ENCODE measurements at regions of chr2 and their contacts with region 1.

Region 1: GRCh38 chr2:148020111-148021058 is at the start of gene ORC4:
- DNase-seq: peak; percentile 99
- ATAC-seq: peak; percentile 89
- H3K4me3 Mint-ChIP-seq: peak within 1 kb of the TSS; percentile 95
- H3K27ac Mint-ChIP-seq: peak within 1 kb of the TSS; percentile 98
- H3K4me1 Mint-ChIP-seq: peaks cover 44% of the 10 kb centered on the region
- H3K27me3 Mint-ChIP-seq: no peaks in the 10 kb centered on the region
- total RNA-seq, gene ORC4: 41.2 to 41.8 TPM

Region 2: GRCh38 chr2:147623328-147623727 is 397.1 kb before region 1 on chr2:
- CTCF ChIA-PET with region 1: no interaction called
- POLR2A ChIA-PET with region 1: no interaction called
- intact Hi-C with region 1: loop called in 1 of 2 experiments (anchors 10 kb)
- DNase-seq: peak; percentile 23
- ATAC-seq: peak; percentile 99
- H3K4me3 Mint-ChIP-seq: peak overlapping the region; percentile 41
- H3K27ac Mint-ChIP-seq: peak overlapping the region; percentile 81
- H3K4me1 Mint-ChIP-seq: peaks cover 34% of the 10 kb centered on the region
- H3K27me3 Mint-ChIP-seq: no peaks in the 10 kb centered on the region

Region 3: GRCh38 chr2:147843864-147844696 is 176.3 kb before region 1 on chr2:
- CTCF ChIA-PET with region 1: no interaction called
- POLR2A ChIA-PET with region 1: interaction called, 7 read pairs
- intact Hi-C with region 1: loop called (anchors 1 to 5 kb)
- DNase-seq: peak; percentile 93
- ATAC-seq: peak; percentile 82
- H3K4me3 Mint-ChIP-seq: peak overlapping the region; percentile 82
- H3K27ac Mint-ChIP-seq: peak overlapping the region; percentile 77
- H3K4me1 Mint-ChIP-seq: peaks cover 34% of the 10 kb centered on the region
- H3K27me3 Mint-ChIP-seq: peaks cover 14% of the 10 kb centered on the region

Region 4: DNA sequence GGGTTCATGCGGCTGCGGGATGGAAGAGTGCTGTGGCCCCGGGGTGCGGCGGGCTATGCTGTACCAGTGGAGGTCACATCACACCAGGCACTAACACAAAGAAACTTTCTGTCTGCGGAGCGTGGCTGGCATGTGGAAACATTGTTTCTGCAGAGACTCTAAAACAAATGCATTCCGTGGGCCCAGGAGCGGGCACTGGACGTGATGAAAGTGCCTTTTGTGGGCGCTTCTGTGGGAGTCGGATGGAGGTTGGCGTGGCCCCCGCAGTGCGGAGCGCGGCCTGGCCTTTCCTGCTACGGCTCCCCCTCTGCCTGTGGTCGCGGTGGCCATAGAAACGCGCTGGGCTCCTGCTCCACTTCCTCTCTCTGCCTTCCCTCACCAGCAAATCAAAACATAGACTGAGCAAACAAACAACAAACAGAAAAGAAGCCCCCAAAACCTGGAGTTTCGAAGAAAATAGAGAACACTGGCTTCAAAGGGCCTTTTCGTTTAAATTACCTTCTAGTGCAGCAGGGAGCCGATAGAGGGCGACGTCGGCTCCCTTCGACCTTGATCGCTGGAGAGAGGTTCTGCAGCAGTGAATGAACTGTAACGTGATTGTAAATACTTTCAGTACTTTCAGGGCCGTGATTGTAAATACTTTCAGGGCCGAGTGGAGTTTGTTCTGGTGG is 906.0 kb after region 1 on chr2:
- CTCF ChIA-PET with region 1: no interaction called
- POLR2A ChIA-PET with region 1: no interaction called
- intact Hi-C with region 1: loop called (anchors 1 kb)
- DNase-seq: peak; percentile 78
- ATAC-seq: peak; percentile 84
- H3K4me3 Mint-ChIP-seq: peak overlapping the region; percentile 78
- H3K27ac Mint-ChIP-seq: peak overlapping the region; percentile 88
- H3K4me1 Mint-ChIP-seq: peaks cover 16% of the 10 kb centered on the region
- H3K27me3 Mint-ChIP-seq: no peaks in the 10 kb centered on the region

Region 5: DNA sequence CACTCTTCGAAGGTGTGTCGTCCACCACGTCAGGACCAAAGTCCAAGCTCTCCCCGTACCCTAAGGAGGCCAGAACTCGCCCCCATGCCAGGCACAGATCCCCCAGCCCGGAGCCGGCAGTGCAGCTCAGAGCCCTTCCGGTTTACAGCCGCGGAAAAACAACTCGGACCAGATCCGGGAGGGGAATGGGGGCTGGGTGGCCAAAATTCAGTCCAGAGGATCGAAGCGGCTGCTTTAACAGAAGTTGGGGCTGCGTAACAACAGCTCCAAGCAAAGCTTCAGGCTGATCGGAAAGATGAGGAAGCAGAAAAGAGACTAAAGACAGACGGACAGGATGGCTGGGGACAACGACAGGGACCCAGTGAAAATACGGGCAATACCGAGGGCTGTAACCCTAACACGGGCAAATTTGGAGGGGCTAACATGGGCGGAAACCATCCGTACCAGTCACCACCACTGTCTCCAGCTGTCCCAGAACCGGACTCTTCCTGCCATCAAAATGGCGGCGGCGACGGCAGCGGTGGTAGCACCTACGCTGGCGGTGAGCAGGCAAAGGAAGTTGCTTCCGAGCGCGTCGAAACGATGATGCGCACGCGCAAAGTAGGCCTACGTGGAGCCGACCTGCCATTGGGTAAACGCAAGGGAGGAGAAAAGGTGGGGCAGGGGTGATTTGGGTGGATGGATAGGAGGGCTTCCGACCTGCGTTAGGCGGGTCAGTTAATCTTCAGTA is 1567.0 kb after region 1 on chr2 and contains the start of gene MMADHC:
- CTCF ChIA-PET with region 1: no interaction called
- POLR2A ChIA-PET with region 1: no interaction called
- intact Hi-C with region 1: loop called (anchors 2 to 5 kb)
- DNase-seq: peak; percentile 96
- ATAC-seq: peak; percentile 99
- H3K4me3 Mint-ChIP-seq: peak within 1 kb of the TSS; percentile 92
- H3K27ac Mint-ChIP-seq: peak within 1 kb of the TSS; percentile 99
- H3K4me1 Mint-ChIP-seq: peaks cover 41% of the 10 kb centered on the region
- H3K27me3 Mint-ChIP-seq: peaks cover 12% of the 10 kb centered on the region
- total RNA-seq, gene MMADHC: 94.7 to 136 TPM